Posterior vena cava (tissue), 2 donors: ENCODE measurements at regions of chr3 and their contacts with region 1.

Region 1: GRCh38 chr3:34683851-34684250 is 885.4 kb downstream of the PDCD6IP start:
- DNase-seq: peak; percentile 84

Region 2: DNA sequence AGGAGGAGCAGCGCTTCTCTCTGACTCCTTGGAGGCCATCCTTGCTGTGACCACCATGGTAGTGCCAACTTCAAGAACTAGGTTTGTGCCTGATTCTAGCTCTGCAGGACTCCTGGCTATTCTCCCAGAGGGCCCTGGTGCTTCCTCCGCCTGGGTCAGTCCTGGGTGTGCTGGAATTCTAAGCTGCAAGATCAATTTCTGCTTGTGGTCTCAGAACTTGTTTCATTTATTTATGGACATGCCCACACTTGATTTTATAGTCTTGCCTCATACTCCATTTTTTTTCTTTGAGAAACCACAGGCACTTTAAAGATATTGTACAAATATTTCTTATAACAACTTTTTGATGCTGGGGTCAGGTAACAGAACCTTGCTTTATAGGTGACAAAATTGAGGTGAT is 797.8 kb before region 1 on chr3:
- intact Hi-C with region 1: loop called in 1 of 2 experiments (anchors 5 kb)
- DNase-seq: no peak

Region 3: DNA sequence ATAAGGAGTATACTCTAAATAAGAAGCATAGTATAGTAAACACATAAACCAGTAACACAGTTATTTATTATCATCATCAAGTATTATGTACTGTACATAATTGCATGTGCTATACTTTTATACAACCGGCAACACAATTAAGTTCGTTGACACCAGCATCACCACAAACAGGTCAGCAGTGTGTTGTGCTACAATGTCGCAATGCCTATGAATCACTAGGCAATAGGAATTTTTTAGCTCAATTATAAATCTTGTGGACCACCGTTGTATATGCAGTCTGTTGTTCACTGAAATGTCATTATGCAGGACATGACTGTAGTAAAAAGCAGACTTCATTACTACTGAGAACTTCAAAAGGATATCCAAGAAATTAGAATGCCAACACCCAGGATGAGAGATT is 708.4 kb before region 1 on chr3:
- intact Hi-C with region 1: loop called in 1 of 2 experiments (anchors 10 kb)
- DNase-seq: no peak

Region 4: GRCh38 chr3:34635352-34635850 is 48.5 kb before region 1 on chr3:
- intact Hi-C with region 1: no loop called
- DNase-seq: no peak

Region 5: DNA sequence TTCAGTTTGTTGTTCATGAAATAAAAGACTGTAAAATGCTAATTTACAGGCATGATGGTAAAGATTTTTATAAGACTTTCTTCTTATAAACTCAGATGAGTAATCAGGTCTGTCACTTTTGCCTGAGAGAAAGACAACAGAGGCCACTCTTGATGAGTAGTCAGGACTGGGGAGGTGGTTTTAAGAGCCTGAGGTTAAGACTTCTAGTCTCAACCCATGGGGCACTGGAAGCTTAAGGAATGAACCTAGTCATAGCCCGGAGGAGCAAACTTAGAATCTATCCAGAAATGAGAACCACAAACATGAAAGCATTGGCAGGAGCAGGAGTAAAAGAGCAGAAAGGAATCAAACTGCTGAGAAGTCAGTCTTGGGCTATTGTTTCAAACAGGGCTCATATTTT is 109.2 kb after region 1 on chr3:
- intact Hi-C with region 1: no loop called
- DNase-seq: no peak